WTC11 (cell line): ENCODE measurements at regions of chr6 and their contacts with region 1.

Region 1: GRCh38 chr6:87820343-87820984 is 118.4 kb upstream of the AKIRIN2 start:
- DNase-seq: no peak
- ATAC-seq: no peak
- H3K4me3 Mint-ChIP-seq: no peak overlapping the region
- H3K27ac Mint-ChIP-seq: no peak overlapping the region
- H3K4me1 Mint-ChIP-seq: no peaks in the 10 kb centered on the region
- H3K27me3 Mint-ChIP-seq: no peaks in the 10 kb centered on the region; the same call in 1 of the 2 replicates
- CTCF ChIP-seq: no peak

Region 2: DNA sequence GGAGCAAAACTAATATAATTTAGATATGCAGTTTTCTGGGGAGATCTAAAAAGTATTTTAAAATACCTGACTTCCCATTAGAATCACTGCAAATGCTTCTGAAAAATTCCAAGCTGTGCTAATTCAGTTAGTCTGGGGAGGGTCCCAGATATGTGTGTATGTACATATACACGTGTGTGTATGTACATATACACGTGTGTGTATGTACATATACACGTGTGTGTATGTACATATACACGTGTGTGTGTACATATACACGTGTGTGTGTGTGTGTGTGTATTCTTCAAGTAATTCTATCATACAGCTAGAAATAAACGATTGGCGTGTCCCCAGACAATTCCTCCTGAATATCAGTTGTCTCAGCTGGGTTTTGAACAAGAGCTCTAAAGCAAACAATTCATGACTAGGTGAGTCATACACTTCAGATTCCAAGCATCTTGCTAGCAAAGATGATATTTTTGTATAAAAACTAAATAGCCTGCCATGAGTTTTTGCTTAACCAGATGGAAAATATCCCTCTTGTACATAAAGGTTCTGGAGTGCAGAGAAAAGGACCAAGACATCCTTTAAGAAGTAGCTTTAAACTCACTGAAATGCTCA is 285.4 kb after region 1 on chr6:
- CTCF ChIA-PET with region 1: no interaction called
- POLR2A ChIA-PET with region 1: interaction called, 11 read pairs
- DNase-seq: no peak
- ATAC-seq: no peak
- H3K4me3 Mint-ChIP-seq: no peak overlapping the region
- H3K27ac Mint-ChIP-seq: no peak overlapping the region
- H3K4me1 Mint-ChIP-seq: peaks cover 6% of the 10 kb centered on the region
- H3K27me3 Mint-ChIP-seq: no peaks in the 10 kb centered on the region
- CTCF ChIP-seq: no peak